A549 (cell line): ENCODE measurements at regions of chr13 and their contacts with region 1.

Region 1: GRCh38 chr13:25037057-25037813 is 58.7 kb upstream of the PABPC3 start:
- DNase-seq: peak in 1 of 2 experiments; percentile 67
- ATAC-seq: peak; percentile 84 to 94
- H3K4me3 ChIP-seq: no peak overlapping the region
- H3K27ac ChIP-seq: no peak overlapping the region
- H3K4me1 ChIP-seq: no peaks in the 10 kb centered on the region
- CTCF ChIP-seq: peak; percentile 57
- EP300 ChIP-seq: no peak
- POLR2A ChIP-seq: no peak
- RAD21 ChIP-seq: peak; percentile 60 to 70

Region 2: GRCh38 chr13:24995226-24995804 is 41.9 kb before region 1 on chr13:
- CTCF ChIA-PET with region 1: interaction called, 12 read pairs
- POLR2A ChIA-PET with region 1: no interaction called
- DNase-seq: peak; percentile 56 to 85
- ATAC-seq: peak; percentile 87 to 98
- H3K4me3 ChIP-seq: no peak overlapping the region
- H3K27ac ChIP-seq: no peak overlapping the region
- H3K4me1 ChIP-seq: no peaks in the 10 kb centered on the region
- CTCF ChIP-seq: peak; percentile 66
- EP300 ChIP-seq: no peak
- POLR2A ChIP-seq: no peak
- RAD21 ChIP-seq: peak; percentile 61 to 73

Region 3: DNA sequence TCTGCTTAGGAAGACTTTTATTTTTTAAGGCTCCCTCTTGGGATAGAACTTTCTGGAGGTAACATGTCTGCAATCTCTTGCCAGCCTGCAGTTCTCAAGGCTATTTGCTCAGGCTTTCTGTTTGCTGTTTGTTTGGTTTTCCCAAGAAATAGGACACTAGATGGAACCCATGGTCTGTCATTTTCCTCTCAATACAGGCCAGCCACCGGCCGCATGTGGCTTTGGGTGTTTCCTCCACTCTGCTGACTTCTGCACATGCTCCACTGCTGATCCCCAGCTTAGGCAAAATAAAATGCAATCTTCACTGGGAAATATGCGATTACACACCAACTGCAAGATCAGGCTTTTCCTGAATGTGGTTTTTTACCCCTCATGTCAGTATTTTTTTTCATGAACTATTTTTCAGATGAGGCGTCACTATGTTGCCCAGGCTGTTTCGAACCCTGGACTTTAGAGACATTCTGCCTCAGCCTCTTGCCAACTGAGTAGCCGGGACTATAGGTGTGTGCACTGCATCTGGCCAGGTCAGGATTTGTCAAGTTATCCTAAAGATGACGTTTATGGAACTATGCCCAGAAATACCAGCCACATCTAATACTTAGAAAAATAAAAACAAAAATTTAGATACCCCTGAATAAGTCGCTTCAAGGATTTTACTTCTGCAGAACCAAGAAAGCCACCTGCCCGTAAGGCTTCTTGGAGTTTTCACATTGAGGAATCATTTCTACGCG is 35.6 kb before region 1 on chr13:
- CTCF ChIA-PET with region 1: interaction called, 18 read pairs
- POLR2A ChIA-PET with region 1: no interaction called
- DNase-seq: peak in 1 of 2 experiments; percentile 26
- ATAC-seq: peak; percentile 28 to 33; a peak in 2 of 6 replicates
- H3K4me3 ChIP-seq: no peak overlapping the region
- H3K27ac ChIP-seq: peak overlapping the region; percentile 51 to 65; a peak in 3 of 6 replicates
- H3K4me1 ChIP-seq: peaks cover 14% of the 10 kb centered on the region
- CTCF ChIP-seq: no peak
- EP300 ChIP-seq: no peak
- POLR2A ChIP-seq: no peak
- RAD21 ChIP-seq: no peak